CD8-positive, alpha-beta T cell (primary cell): ENCODE measurements at regions of chr11 and their contacts with region 1.

Region 1: GRCh38 chr11:118834427-118835028 is 43.6 kb upstream of the DDX6 start:
- DNase-seq: peak in 2 of 9 experiments; percentile 25 to 53
- ATAC-seq: no peak
- H3K4me3 ChIP-seq: peak overlapping the region in 1 of 2 experiments; percentile 10
- H3K4me3 Mint-ChIP-seq: peak overlapping the region; percentile 75
- H3K27ac ChIP-seq: peak overlapping the region in 1 of 2 experiments; percentile 18
- H3K27ac Mint-ChIP-seq: peak overlapping the region; percentile 65
- H3K4me1 ChIP-seq: peaks cover 9% of the 10 kb centered on the region
- H3K4me1 Mint-ChIP-seq: peaks cover 20% of the 10 kb centered on the region
- H3K27me3 ChIP-seq: no peaks in the 10 kb centered on the region
- H3K27me3 Mint-ChIP-seq: no peaks in the 10 kb centered on the region
- CTCF ChIP-seq: no peak

Region 2: DNA sequence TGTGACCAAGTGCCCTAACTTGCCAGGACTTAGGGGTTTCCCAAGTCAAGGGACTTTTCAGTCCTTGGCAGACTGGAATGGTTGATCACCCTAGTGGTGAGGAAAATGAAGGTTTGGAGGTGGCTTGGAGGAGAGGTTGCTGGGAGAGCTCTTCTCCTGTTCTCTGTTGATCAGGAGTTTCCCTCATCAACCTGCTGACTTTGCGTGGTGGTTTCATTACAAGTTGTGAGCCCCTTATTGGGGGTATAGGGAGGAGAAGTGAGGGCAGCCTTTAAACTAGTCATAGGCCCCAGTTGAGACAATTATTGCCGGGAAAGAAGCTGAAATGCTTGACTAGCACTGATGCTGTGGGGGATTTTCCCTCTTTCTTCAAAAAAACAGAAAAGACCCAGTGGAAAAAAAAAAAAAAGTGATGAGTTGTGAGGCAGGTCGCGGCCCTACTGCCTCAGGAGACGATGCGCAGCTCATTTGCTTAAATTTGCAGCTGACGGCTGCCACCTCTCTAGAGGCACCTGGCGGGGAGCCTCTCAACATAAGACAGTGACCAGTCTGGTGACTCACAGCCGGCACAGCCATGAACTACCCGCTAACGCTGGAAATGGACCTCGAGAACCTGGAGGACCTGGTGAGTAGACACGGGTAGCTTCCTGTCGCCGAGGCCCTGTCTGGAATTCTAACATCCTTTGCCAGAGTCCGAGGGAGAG is 49.0 kb after region 1 on chr11 and contains the start of gene CXCR5:
- CTCF ChIA-PET with region 1: no interaction called
- POLR2A ChIA-PET with region 1: no interaction called
- intact Hi-C with region 1: loop called in 1 of 2 experiments (anchors 5 kb)
- DNase-seq: peak in 3 of 9 experiments; percentile 43 to 66 (median 48)
- ATAC-seq: peak; percentile 45
- H3K4me3 ChIP-seq: peak within 1 kb of the TSS in 1 of 2 experiments; percentile 28
- H3K4me3 Mint-ChIP-seq: peak within 1 kb of the TSS; percentile 63
- H3K27ac ChIP-seq: no peak within 1 kb of the TSS
- H3K27ac Mint-ChIP-seq: peak within 1 kb of the TSS; percentile 62
- H3K4me1 ChIP-seq: peaks cover 47% of the 10 kb centered on the region
- H3K4me1 Mint-ChIP-seq: peaks cover 71% of the 10 kb centered on the region
- H3K27me3 ChIP-seq: no peaks in the 10 kb centered on the region
- H3K27me3 Mint-ChIP-seq: no peaks in the 10 kb centered on the region
- CTCF ChIP-seq: no peak
- total RNA-seq, gene CXCR5: 7.6 to 8.0 TPM